Head of caudate nucleus (tissue), 42 donors: ENCODE measurements at regions of chr10 and their contacts with region 1.

Region 1: GRCh38 chr10:79068562-79069324 is at the start of gene ZMIZ1:
- DNase-seq: peak; percentile 80 to 96 (median 88)

Region 2: GRCh38 chr10:78047314-78047891 is 1021.3 kb before region 1 on chr10:
- intact Hi-C with region 1: loop called (anchors 10 kb)
- DNase-seq: peak; percentile 81 to 98 (median 94)

Region 3: GRCh38 chr10:78302989-78303854 is 765.5 kb before region 1 on chr10:
- intact Hi-C with region 1: loop called (anchors 10 kb)
- DNase-seq: peak; percentile 76 to 99 (median 95)

Region 4: DNA sequence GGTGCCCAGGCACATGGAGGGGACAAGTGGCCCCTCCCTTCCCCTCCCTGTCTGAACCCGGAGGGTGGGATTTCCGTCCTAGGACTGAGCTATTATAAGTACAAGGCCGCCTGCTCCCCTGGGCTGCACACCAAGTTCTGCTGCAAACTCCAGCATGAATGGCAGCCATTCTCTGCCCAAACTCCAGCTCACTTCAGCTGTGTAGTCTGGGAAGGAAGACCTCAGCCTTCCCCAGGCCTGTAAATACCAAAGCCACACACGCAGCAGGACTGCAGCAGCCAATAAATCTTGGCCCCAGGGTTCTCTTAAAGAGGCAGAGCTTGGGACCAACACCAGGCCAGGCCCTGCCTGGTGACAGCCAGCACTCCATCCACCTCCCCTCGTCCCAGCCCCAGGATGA is 291.3 kb before region 1 on chr10:
- intact Hi-C with region 1: loop called (anchors 10 kb)
- DNase-seq: peak; percentile 63 to 92 (median 79)

Region 5: GRCh38 chr10:78865538-78865875 is 203.2 kb before region 1 on chr10:
- intact Hi-C with region 1: loop called (anchors 10 kb)
- DNase-seq: peak in 40 of 42 donors; percentile 43 to 88 (median 66)

Region 6: DNA sequence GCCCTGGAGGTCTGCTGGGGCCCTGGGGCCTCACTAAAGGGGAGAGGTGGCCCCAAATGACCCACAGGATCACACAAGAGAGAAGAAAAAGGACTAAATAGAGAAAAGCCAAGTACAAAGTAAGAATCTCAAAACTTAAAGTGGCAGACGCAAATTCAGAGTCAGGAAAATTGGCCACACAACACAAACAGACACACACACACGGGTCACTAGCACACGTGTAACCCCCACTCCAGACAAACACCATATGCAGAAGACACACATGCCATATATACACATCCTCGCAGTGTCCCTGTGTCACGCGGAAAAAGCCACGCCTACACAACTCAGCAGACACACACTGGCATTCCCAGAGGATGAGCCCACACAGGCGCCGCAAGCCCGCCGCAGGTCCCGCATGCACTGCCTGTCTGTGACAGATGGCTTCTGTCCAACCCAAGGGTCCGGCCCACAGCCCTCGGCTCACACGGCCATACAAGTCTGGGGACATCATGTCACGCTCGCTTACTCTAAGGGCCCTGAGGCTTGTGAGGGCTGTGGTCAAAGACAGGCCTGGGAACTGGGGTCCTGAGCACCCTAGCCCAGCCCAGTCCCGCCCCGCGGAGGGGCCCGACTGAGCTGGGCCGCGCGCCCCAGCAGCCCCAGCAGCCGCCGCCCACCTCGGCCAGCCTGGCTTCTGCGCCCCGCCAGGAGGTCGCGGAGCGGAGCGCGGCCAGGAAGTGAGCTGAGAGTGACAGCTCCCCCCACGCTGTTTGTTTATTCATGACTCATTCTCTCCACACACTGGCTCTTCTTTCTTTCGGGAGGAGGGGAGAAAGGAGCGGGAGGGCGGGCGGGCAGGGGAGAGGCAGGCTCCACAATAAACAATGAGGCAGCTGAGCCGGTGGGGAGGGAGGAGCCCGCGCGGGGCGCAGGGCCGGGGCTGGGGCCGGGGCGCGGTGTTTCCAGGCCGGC is 95.5 kb before region 1 on chr10:
- intact Hi-C with region 1: loop called (anchors 2 kb)
- DNase-seq: peak; percentile 71 to 95 (median 85)

Region 7: DNA sequence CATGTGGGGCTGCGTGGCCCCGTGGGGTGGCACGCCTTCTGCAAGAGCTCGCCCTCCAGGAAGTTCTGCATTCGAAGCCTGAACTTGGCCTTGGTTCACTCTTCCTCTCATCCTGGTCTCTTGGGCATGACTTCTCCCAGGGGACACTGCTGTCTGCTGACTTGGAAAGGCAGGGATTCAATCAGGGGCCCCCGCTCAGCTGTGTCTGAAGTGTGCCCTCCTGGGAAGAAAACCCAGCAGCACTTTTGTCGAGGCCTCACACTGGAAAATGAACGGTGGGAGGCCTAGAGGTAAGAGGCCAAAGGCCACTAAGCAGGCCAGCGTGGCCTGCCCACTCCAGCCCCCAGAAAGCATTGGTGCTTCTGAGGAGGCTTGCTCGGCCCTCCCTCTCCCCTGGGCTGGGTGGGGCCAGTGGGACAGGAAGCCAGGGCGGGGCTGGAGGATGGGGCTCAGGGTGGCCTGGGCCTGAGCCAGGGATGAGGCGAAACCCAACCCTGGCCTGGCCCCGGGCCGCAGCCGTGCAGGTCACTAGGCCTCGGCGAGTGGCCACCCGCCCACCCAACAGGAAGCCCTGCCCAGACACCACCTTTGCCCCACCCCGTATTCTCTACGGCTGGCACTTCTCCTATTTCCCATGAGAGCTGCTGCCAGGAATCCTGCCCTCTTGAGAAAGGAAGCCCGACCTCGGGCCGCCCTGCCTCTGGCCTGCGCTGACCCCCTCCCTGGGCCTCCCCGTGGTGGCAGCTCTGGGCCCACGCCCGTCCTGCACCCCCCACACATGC is 81.1 kb after region 1 on chr10:
- intact Hi-C with region 1: loop called (anchors 5 kb)
- DNase-seq: peak in 1 of 42 donors; percentile 35

Region 8: DNA sequence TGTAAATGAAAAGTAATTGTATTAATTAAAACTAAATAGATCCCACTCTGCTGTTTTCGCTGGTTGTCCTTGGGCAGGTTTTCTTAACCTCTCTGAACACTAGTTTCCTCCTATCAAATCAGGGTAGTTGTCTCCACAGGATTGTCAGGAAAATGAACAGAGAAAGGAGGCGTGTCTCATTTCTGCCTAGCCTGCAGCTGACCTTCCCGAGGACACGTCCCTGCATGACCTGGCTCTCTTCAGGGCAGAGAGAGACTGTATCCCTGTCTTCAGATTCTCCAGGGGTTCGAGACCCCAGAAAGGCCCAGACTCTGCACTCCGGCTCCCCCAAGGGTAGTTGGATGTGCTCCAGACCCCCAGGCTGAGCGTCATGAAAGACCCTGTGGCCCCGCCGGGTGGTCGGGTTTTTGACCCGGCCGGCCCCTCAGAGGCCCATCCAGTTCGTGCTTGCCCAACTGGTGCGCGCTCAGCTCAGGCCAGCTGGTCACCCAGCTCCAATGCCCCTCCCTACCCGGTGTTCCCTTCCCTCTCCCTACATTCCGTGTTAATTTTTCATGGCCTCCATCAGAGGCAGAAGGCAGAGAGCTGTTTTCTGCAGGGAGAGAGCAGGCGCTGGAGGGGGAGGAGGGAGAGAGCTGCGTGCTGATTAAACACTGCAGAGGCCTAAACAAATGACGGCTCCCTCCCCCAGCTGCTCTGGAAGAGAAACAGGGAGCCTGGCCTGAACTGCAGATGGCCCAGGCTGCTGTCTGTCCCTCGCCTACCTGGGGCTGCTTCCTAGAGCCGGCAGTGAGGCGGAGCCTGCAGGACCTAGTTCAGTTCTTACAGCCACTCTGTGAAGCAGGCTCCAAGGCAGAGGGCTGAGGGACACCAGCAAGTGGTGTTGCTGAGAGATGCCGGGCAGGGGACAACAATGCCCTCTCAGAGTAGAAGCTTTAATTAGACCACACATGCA is 192.3 kb after region 1 on chr10:
- intact Hi-C with region 1: no loop called
- DNase-seq: peak in 29 of 42 donors; percentile 38 to 78 (median 59)

Region 9: GRCh38 chr10:79347226-79347893 is 278.6 kb after region 1 on chr10 and contains the start of gene PPIF:
- intact Hi-C with region 1: no loop called
- DNase-seq: peak; percentile 91 to 99 (median 96)